RWPE1 (cell line): ENCODE measurements at regions of chr14 and their contacts with region 1.

Region 1: GRCh38 chr14:100199240-100199860 is 39.6 kb upstream of the YY1 start:
- DNase-seq: peak; percentile 30
- H3K27ac ChIP-seq: peak overlapping the region; percentile 37
- CTCF ChIP-seq: no peak

Region 2: DNA sequence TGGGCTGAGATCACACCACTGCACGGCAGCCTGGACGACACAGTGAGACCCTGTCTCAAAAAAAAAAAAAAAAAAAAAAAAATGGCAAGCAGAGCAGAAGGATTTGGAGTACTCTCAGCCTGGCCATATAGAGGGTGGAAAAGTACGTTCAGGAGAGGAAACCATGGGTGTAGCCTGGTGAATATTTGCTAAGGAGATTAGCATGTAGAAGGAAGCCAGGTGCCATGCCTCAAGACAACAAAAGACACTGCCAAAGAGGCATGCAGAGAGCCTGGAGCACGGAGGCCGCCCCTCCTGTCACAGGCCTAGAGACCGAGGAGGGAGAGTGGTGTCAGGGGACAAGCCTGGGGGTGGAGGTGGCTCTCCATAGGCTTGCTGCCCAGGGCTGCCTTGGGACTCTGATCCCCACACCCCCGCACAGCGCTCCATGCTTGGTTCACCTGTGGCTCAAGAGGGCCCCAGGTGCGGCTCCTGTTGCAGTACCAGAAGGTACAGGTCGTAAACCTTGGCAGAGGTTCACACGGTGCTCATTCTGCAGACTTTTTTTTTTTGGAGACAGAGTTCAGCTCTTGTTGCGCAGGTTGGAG is 12.0 kb before region 1 on chr14:
- CTCF ChIA-PET with region 1: no interaction called
- POLR2A ChIA-PET with region 1: interaction called, 13 read pairs
- DNase-seq: no peak
- H3K27ac ChIP-seq: no peak overlapping the region
- CTCF ChIP-seq: no peak

Region 3: GRCh38 chr14:101101456-101102056 is 902.2 kb after region 1 on chr14:
- CTCF ChIA-PET with region 1: no interaction called
- POLR2A ChIA-PET with region 1: no interaction called
- DNase-seq: peak; percentile 34
- H3K27ac ChIP-seq: no peak overlapping the region
- CTCF ChIP-seq: no peak